Activated CD4-positive, alpha-beta T cell treated with anti-CD3 and anti-CD28 coated beads for 36 hours (primary cell): ENCODE measurements at regions of chr9 and their contacts with region 1.

Region 1: GRCh38 chr9:21761309-21761901 is 41.0 kb upstream of the MTAP start:
- DNase-seq: peak; percentile 60
- ATAC-seq: peak; percentile 95
- H3K4me3 Mint-ChIP-seq: no peak overlapping the region
- H3K27ac Mint-ChIP-seq: no peak overlapping the region
- H3K4me1 Mint-ChIP-seq: peaks cover 12% of the 10 kb centered on the region
- H3K27me3 Mint-ChIP-seq: peaks cover 49% of the 10 kb centered on the region

Region 2: DNA sequence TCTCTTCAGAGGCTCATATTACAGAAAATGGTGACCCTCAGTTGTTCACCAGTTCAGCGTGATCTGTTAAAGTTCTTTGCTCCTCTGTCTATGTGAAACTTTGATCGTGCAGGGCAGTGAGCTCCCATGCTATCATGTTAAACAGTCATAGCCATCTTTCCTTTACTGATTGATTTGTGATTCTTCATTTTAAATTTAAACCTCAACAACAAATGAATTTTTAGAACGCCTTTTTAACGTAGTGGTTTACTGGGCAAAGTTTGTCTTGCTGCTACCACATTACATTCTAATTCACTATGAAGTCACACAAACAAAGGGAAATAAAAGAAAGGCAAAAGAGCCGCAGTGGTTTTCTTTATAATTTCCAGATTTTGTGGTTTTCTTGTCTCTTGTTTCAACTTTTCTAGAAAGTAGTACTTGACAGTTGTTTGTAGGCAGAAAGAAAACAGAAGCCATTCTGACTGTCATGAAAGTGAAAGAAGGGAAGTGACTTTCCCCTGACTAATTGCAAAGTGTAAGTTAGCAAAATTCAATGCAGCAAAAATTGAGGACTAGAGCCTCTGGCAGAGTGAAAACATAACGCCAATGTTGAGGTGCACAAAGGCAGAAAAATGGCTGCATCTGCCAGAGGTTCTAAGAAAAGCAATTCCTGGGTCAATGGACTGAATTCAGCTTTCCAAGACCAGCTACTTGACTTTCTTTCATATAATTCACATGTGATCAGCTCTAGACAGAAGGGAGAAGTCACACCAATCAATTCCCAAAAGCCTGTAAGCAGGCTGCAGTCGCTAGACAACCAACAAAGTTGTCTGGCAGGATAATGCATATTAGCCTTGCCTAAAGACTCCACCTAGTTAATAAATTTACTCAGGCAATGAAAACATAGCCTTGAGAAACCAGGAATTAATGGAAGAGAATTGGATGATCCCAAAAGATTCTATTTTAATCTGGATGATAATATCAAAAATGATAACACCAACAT is 403.6 kb before region 1 on chr9:
- CTCF ChIA-PET with region 1: no interaction called
- POLR2A ChIA-PET with region 1: no interaction called
- intact Hi-C with region 1: loop called in 1 of 2 experiments (anchors 1 kb)
- DNase-seq: peak; percentile 40
- ATAC-seq: peak; percentile 94
- H3K4me3 Mint-ChIP-seq: peak overlapping the region; percentile 35
- H3K27ac Mint-ChIP-seq: peak overlapping the region; percentile 70
- H3K4me1 Mint-ChIP-seq: peaks cover 19% of the 10 kb centered on the region
- H3K27me3 Mint-ChIP-seq: peaks cover 18% of the 10 kb centered on the region

Region 3: GRCh38 chr9:21559424-21560280 is 201.8 kb before region 1 on chr9:
- CTCF ChIA-PET with region 1: no interaction called
- POLR2A ChIA-PET with region 1: no interaction called
- intact Hi-C with region 1: loop called in 1 of 2 experiments (anchors 1 kb)
- DNase-seq: peak; percentile 69
- ATAC-seq: peak; percentile 88
- H3K4me3 Mint-ChIP-seq: peak overlapping the region; percentile 86
- H3K27ac Mint-ChIP-seq: no peak overlapping the region
- H3K4me1 Mint-ChIP-seq: peaks cover 33% of the 10 kb centered on the region
- H3K27me3 Mint-ChIP-seq: peaks cover 30% of the 10 kb centered on the region

Region 4: DNA sequence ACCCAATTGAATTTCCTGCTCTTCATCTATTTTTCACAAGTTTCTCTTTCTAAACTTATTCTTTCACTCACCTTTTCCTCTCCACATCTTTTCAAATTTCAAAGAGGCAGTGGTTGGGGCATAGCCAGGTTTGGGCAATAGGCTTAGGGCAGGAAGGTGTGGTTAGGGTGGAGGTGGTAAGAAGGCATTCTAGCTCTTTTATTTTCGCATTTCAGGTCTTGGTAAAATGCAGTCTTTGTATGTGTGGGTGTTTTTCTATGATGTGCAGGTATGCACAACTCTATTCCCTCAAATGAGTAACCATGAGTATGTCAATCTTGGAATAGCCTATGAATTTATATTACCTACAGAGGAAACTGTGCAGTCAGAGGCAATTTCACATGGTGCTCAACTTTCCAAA is 149.5 kb before region 1 on chr9:
- CTCF ChIA-PET with region 1: no interaction called
- POLR2A ChIA-PET with region 1: no interaction called
- intact Hi-C with region 1: loop called in 1 of 2 experiments (anchors 5 kb)
- DNase-seq: peak; percentile 57
- ATAC-seq: peak; percentile 87
- H3K4me3 Mint-ChIP-seq: no peak overlapping the region
- H3K27ac Mint-ChIP-seq: no peak overlapping the region
- H3K4me1 Mint-ChIP-seq: peaks cover 61% of the 10 kb centered on the region
- H3K27me3 Mint-ChIP-seq: no peaks in the 10 kb centered on the region

Region 5: GRCh38 chr9:21777701-21778100 is 16.3 kb after region 1 on chr9:
- CTCF ChIA-PET with region 1: no interaction called
- POLR2A ChIA-PET with region 1: interaction called, 5 read pairs
- intact Hi-C with region 1: loop called in 1 of 2 experiments (anchors 1 kb)
- DNase-seq: no peak
- ATAC-seq: no peak
- H3K4me3 Mint-ChIP-seq: no peak overlapping the region
- H3K27ac Mint-ChIP-seq: no peak overlapping the region
- H3K4me1 Mint-ChIP-seq: peaks cover 3% of the 10 kb centered on the region
- H3K27me3 Mint-ChIP-seq: no peaks in the 10 kb centered on the region

Region 6: GRCh38 chr9:21802195-21803000 is 41.0 kb after region 1 on chr9 and contains the start of gene MTAP:
- CTCF ChIA-PET with region 1: no interaction called
- POLR2A ChIA-PET with region 1: no interaction called
- intact Hi-C with region 1: loop called in 1 of 2 experiments (anchors 2 kb)
- DNase-seq: peak; percentile 85
- ATAC-seq: peak; percentile 89
- H3K4me3 Mint-ChIP-seq: peak within 1 kb of the TSS; percentile 99
- H3K27ac Mint-ChIP-seq: peak within 1 kb of the TSS; percentile 99
- H3K4me1 Mint-ChIP-seq: peaks cover 38% of the 10 kb centered on the region
- H3K27me3 Mint-ChIP-seq: peaks cover 8% of the 10 kb centered on the region
- total RNA-seq, gene MTAP: 59.6 to 77.0 TPM